ENCODE measurements at regions of chr7 and their contacts with region 1.

Region 1: GRCh38 chr7:83410989-83411591 is 237.8 kb downstream of the SEMA3E start:
- DNase-seq: peak; percentile 54
- H3K4me3 ChIP-seq: no peak overlapping the region
- H3K27ac ChIP-seq: no peak overlapping the region
- H3K4me1 ChIP-seq: no peaks in the 10 kb centered on the region
- H3K27me3 ChIP-seq: peaks cover 0 to 6% of the 10 kb centered on the region in 2 experiments
- CTCF ChIP-seq: peak; percentile 42 to 45
- POLR2A ChIP-seq: no peak

Region 2: GRCh38 chr7:83517035-83517700 is 106.1 kb after region 1 on chr7:
- CTCF ChIA-PET with region 1: interaction called, 10 read pairs
- POLR2A ChIA-PET with region 1: no interaction called
- dilution Hi-C with region 1: no loop called
- intact Hi-C with region 1: loop called (anchors 1 kb)
- DNase-seq: no peak
- H3K4me3 ChIP-seq: no peak overlapping the region
- H3K27ac ChIP-seq: no peak overlapping the region
- H3K4me1 ChIP-seq: no peaks in the 10 kb centered on the region
- H3K27me3 ChIP-seq: no peaks in the 10 kb centered on the region
- CTCF ChIP-seq: no peak
- POLR2A ChIP-seq: no peak

Region 3: DNA sequence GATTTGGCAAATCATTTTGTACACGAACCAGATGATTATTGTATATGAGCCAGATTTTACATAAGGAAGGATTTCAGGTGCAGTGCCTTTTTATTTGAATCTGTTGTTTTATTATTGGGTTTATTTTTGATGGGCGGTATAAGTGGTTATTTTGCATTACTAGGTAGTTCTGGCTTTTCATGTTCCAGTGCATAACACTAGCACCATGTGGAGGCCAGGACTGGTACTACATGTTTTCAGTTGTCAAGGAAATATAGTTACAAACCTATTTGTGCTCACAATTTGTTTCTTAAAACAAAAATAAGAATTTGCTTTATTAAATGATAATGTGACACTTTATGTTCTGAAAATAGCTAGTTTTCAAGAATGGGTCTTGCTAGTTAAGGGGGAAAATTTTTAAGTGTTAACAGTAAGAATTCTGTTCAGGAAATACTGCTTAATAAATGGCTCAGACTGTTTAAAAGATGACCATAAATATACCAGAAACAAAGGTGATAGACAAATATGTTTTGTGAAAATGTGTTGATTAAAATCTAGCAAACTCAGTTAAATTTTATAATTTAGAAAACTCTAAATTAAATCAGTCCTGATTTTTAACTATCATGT is 245.0 kb after region 1 on chr7:
- CTCF ChIA-PET with region 1: interaction called, 6 read pairs
- POLR2A ChIA-PET with region 1: no interaction called
- dilution Hi-C with region 1: no loop called
- intact Hi-C with region 1: loop called (anchors 1 kb)
- DNase-seq: peak; percentile 64
- H3K4me3 ChIP-seq: no peak overlapping the region
- H3K27ac ChIP-seq: no peak overlapping the region
- H3K4me1 ChIP-seq: no peaks in the 10 kb centered on the region
- H3K27me3 ChIP-seq: peaks cover 10 to 14% of the 10 kb centered on the region in 2 experiments
- CTCF ChIP-seq: peak; percentile 52 to 64
- POLR2A ChIP-seq: no peak

Measured in endothelial cell of umbilical vein (primary cell).